ENCODE measurements at regions of chr6 and their contacts with region 1.

Region 1: GRCh38 chr6:28335564-28336283 is at the start of gene ZSCAN31:
- DNase-seq: peak; percentile 97
- ATAC-seq: peak; percentile 85
- H3K4me3 ChIP-seq: peak within 1 kb of the TSS; percentile 75
- H3K27ac ChIP-seq: peak within 1 kb of the TSS; percentile 83
- H3K4me1 ChIP-seq: peaks cover 12% of the 10 kb centered on the region
- H3K27me3 ChIP-seq: no peaks in the 10 kb centered on the region
- CTCF ChIP-seq: no peak
- total RNA-seq, gene ZSCAN31: 10.7 and 16.9 TPM in 2 replicates

Region 2: GRCh38 chr6:27631609-27631916 is 704.2 kb before region 1 on chr6:
- CTCF ChIA-PET with region 1: no interaction called
- POLR2A ChIA-PET with region 1: no interaction called
- intact Hi-C with region 1: no loop called
- DNase-seq: no peak
- ATAC-seq: no peak
- H3K4me3 ChIP-seq: peak overlapping the region; percentile 75; the same call in 1 of the 2 replicates
- H3K27ac ChIP-seq: no peak overlapping the region
- H3K4me1 ChIP-seq: 0 out of 2 replicates have a peak, but pooled peaks cover 4% of the 10 kb centered on the region
- H3K27me3 ChIP-seq: no peaks in the 10 kb centered on the region
- CTCF ChIP-seq: no peak

Region 3: GRCh38 chr6:27893059-27893835 is 442.5 kb before region 1 on chr6:
- CTCF ChIA-PET with region 1: no interaction called
- POLR2A ChIA-PET with region 1: no interaction called
- intact Hi-C with region 1: no loop called
- DNase-seq: peak; percentile 98
- ATAC-seq: peak; percentile 68
- H3K4me3 ChIP-seq: peak overlapping the region; percentile 83
- H3K27ac ChIP-seq: peak overlapping the region; percentile 85
- H3K4me1 ChIP-seq: peaks cover 10% of the 10 kb centered on the region; the same call in 1 of the 2 replicates
- H3K27me3 ChIP-seq: no peaks in the 10 kb centered on the region
- CTCF ChIP-seq: no peak

Region 4: GRCh38 chr6:28225056-28225834 is 110.5 kb before region 1 on chr6 and contains the start of gene ZSCAN9:
- CTCF ChIA-PET with region 1: no interaction called
- POLR2A ChIA-PET with region 1: no interaction called
- intact Hi-C with region 1: loop called (anchors 5 kb)
- DNase-seq: peak; percentile 93
- ATAC-seq: peak; percentile 93
- H3K4me3 ChIP-seq: peak within 1 kb of the TSS; percentile 92
- H3K27ac ChIP-seq: peak within 1 kb of the TSS; percentile 42
- H3K4me1 ChIP-seq: peaks cover 20% of the 10 kb centered on the region
- H3K27me3 ChIP-seq: no peaks in the 10 kb centered on the region
- CTCF ChIP-seq: no peak
- total RNA-seq, gene ZSCAN9: 10.8 and 11.7 TPM in 2 replicates

Region 5: GRCh38 chr6:28266962-28267694 is 68.6 kb before region 1 on chr6 and contains the start of gene ZSCAN26:
- CTCF ChIA-PET with region 1: no interaction called
- POLR2A ChIA-PET with region 1: interaction called, 8 read pairs
- intact Hi-C with region 1: loop called (anchors 5 kb)
- DNase-seq: peak; percentile 93
- ATAC-seq: peak; percentile 91
- H3K4me3 ChIP-seq: peak within 1 kb of the TSS; percentile 86
- H3K27ac ChIP-seq: peak within 1 kb of the TSS; percentile 48
- H3K4me1 ChIP-seq: peaks cover 28% of the 10 kb centered on the region
- H3K27me3 ChIP-seq: no peaks in the 10 kb centered on the region
- CTCF ChIP-seq: no peak
- total RNA-seq, gene ZSCAN26: 10.8 and 12.3 TPM in 2 replicates

Region 6: GRCh38 chr6:28281288-28282064 is 54.2 kb before region 1 on chr6 and contains the start of gene PGBD1:
- CTCF ChIA-PET with region 1: interaction called, 4 read pairs
- POLR2A ChIA-PET with region 1: no interaction called
- intact Hi-C with region 1: loop called (anchors 1 kb)
- DNase-seq: peak; percentile 80
- ATAC-seq: peak; percentile 94
- H3K4me3 ChIP-seq: peak within 1 kb of the TSS; percentile 96
- H3K27ac ChIP-seq: no peak within 1 kb of the TSS
- H3K4me1 ChIP-seq: peaks cover 19% of the 10 kb centered on the region
- H3K27me3 ChIP-seq: no peaks in the 10 kb centered on the region
- CTCF ChIP-seq: no peak
- total RNA-seq, gene PGBD1: 6.2 and 9.0 TPM in 2 replicates

Region 7: DNA sequence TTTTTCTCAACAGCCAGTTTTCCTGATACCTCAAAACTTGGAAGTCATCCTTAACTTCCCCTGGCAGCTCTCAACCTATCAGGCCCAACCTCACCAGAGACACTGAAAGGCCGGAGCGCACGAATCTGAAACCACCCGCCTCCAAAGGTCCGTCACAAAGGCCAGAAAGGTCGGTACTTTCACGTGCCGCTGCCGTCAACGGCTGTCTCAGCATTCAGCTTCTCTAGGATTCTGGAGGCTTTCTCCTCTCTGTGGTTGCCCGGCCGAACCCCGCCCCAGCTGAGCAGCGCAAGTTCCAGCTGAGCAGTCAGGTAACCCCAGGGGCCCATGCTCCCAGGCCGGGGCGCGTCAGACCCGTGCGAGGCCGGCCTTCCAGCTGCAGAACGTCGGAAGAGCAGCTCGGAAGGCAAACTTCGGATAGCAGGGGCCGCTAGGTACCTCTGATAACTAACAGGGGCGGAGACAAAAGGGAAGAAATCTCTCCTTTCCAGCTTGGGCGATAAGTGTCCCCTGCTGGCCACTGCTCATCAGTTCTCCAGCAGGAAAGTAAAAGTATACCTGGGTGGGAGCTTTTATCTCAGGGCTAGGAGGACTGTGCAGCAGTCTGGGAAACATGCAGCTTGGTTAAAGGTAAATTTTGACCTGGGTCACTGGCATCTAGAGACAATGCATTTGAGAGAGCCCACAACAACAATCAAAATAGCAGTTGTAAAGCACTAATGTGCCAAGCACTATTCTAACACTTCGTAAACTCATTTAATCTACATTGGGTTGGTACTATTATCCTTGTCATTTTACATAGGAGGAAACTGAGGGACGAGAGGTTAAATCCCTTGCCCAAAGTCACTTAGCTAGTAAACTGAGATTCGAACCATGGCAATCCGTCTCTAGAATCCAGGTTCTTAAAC is 47.8 kb after region 1 on chr6:
- CTCF ChIA-PET with region 1: no interaction called
- POLR2A ChIA-PET with region 1: no interaction called
- intact Hi-C with region 1: loop called (anchors 1 kb)
- DNase-seq: peak; percentile 89
- ATAC-seq: peak; percentile 93
- H3K4me3 ChIP-seq: peak overlapping the region; percentile 78
- H3K27ac ChIP-seq: peak overlapping the region; percentile 38
- H3K4me1 ChIP-seq: peaks cover 12% of the 10 kb centered on the region
- H3K27me3 ChIP-seq: no peaks in the 10 kb centered on the region
- CTCF ChIP-seq: peak; percentile 80

Measured in PC-3 (cell line).